Endothelial cell of umbilical vein (primary cell): ENCODE measurements at regions of chrX and their contacts with region 1.

Region 1: GRCh38 chrX:65451663-65452062 is 82.9 kb downstream of the LAS1L start:
- DNase-seq: peak; percentile 19
- H3K4me3 ChIP-seq: no peak overlapping the region
- H3K27ac ChIP-seq: no peak overlapping the region
- H3K4me1 ChIP-seq: no peaks in the 10 kb centered on the region
- H3K27me3 ChIP-seq: no peaks in the 10 kb centered on the region
- CTCF ChIP-seq: peak in 1 of 2 donors; percentile 40
- POLR2A ChIP-seq: no peak

Region 2: GRCh38 chrX:64093761-64094160 is 1357.9 kb before region 1 on chrX:
- CTCF ChIA-PET with region 1: interaction called, 10 read pairs
- POLR2A ChIA-PET with region 1: no interaction called
- dilution Hi-C with region 1: no loop called
- intact Hi-C with region 1: no loop called
- DNase-seq: peak; percentile 1
- H3K4me3 ChIP-seq: no peak overlapping the region
- H3K27ac ChIP-seq: no peak overlapping the region
- H3K4me1 ChIP-seq: no peaks in the 10 kb centered on the region
- H3K27me3 ChIP-seq: no peaks in the 10 kb centered on the region
- CTCF ChIP-seq: no peak
- POLR2A ChIP-seq: no peak

Region 3: GRCh38 chrX:65194547-65194946 is 257.1 kb before region 1 on chrX:
- CTCF ChIA-PET with region 1: no interaction called
- POLR2A ChIA-PET with region 1: no interaction called
- dilution Hi-C with region 1: no loop called
- intact Hi-C with region 1: no loop called
- DNase-seq: no peak
- H3K4me3 ChIP-seq: no peak overlapping the region
- H3K27ac ChIP-seq: no peak overlapping the region
- H3K4me1 ChIP-seq: no peaks in the 10 kb centered on the region
- H3K27me3 ChIP-seq: no peaks in the 10 kb centered on the region
- CTCF ChIP-seq: no peak
- POLR2A ChIP-seq: no peak